HCT116 (cell line): ENCODE measurements at regions of chr11 and their contacts with region 1.

Region 1: DNA sequence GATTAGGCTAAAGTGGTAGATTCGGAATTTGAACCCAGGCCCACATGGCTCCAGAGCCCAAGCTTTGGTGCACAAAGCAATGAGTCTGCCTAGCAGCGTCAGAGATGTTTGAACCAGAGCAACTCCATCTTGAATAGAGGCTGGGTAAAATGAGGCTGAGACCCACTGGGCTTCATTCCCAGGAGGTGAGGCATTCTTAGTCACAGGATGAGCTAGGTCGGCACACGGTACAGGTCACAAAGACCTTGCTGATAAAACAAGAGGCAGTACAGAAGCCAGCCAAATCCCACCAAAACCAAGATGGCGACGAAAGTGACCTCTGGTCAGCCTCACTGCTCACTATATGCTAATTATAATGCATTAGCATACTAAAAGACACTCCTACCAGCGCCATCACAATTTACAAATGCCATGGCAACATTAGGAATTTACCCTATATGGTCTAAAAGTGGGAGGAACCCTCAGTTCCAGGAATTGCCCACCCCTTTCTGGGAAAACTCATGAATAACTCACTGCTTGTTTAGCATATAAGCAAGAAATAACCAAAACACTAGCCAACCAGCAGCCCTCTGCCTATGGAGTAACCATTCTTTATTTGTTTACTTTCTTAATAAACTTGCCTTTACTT is 40.3 kb upstream of the DAGLA start:
- DNase-seq: no peak
- ATAC-seq: no peak
- H3K4me3 ChIP-seq: no peak overlapping the region
- H3K27ac ChIP-seq: no peak overlapping the region
- H3K4me1 ChIP-seq: peaks cover 2 to 13% of the 10 kb centered on the region in 2 experiments; a peak in 2 of 4 replicates
- H3K27me3 ChIP-seq: no peaks in the 10 kb centered on the region
- CTCF ChIP-seq: no peak
- POLR2A ChIP-seq: no peak
- RAD21 ChIP-seq: no peak

Region 2: DNA sequence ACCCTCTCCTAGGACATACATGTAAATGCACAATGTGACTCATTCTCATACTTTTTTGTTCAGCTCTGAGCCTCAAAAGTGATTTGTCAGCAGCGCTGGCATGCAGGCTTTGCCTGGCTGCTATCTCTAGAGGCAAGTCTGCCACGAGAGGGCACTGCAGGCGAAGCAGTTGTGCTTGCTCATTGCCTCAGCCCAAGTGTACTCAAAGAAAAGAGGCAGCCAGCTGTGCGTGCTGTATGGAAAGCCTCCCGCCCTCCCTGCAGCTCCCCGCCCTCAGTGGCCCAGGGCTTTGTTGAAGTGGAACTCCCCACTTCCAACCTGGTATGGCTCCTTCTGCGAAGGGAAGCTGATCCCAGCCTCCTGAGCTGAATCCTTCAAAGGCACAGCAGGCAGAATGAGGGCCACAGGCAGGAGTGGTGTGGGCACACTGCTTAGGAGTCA is 193.7 kb before region 1 on chr11:
- CTCF ChIA-PET with region 1: interaction called, 37 read pairs
- POLR2A ChIA-PET with region 1: no interaction called
- RAD21 ChIA-PET with region 1: no interaction called
- intact Hi-C with region 1: loop called (anchors 1 kb)
- DNase-seq: peak; percentile 73
- ATAC-seq: peak; percentile 98
- H3K4me3 ChIP-seq: no peak overlapping the region
- H3K27ac ChIP-seq: peak overlapping the region; percentile 15; the same call in 1 of the 2 replicates
- H3K4me1 ChIP-seq: peaks cover 0 to 8% of the 10 kb centered on the region in 2 experiments; a peak in 2 of 4 replicates
- H3K27me3 ChIP-seq: no peaks in the 10 kb centered on the region
- CTCF ChIP-seq: peak; percentile 81 to 94 (median 91); a peak in 5 of 6 replicates
- POLR2A ChIP-seq: no peak
- RAD21 ChIP-seq: peak; percentile 84

Region 3: DNA sequence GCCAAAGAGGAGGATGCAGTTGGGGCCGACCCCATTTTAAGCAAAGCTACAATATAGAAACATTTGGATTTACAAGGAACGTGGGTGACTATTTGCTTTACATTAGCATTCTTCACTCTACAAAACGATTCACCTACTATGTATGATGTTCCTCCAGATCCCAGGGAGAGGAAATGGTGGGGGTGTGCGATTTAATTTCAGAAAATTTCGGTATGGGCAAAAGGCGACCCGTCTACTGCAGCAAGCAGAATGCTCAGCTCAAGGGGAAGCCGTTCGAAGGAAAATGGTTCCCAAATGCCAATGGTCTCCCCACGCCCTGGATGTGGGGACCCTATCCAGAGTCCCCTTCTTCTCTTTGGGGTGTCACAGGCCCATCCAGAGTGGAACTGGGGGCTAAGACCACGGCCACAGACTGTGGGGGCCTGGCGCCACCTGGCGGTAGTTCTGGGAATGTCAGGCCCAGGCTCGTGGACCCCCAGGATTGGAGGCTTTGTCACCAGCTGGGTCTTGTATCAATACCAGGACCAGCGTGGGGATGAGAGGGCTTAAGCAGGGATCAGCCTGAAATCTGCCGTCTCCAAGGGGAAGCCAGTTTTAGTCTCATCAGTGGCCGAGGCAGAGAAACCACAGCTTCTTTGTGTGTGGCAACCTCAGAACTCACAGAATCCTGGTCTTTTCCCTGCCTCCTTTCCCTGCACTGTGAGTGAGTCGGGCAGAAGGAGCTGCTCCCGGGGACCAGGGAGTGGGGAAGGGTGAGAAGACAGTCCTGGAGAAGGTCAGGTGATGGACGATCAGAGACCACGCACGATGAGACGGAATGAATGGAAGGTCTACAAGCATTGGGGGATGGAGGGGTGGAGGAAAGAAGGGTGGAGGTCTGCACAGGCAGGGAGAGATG is 123.0 kb before region 1 on chr11:
- CTCF ChIA-PET with region 1: interaction called, 14 read pairs
- POLR2A ChIA-PET with region 1: no interaction called
- RAD21 ChIA-PET with region 1: no interaction called
- intact Hi-C with region 1: no loop called
- DNase-seq: no peak
- ATAC-seq: peak; percentile 75
- H3K4me3 ChIP-seq: no peak overlapping the region
- H3K27ac ChIP-seq: no peak overlapping the region
- H3K4me1 ChIP-seq: peaks cover 8 to 14% of the 10 kb centered on the region in 2 experiments; a peak in 2 of 4 replicates
- H3K27me3 ChIP-seq: no peaks in the 10 kb centered on the region
- CTCF ChIP-seq: peak; percentile 81 to 99 (median 98)
- POLR2A ChIP-seq: no peak
- RAD21 ChIP-seq: peak; percentile 82

Region 4: DNA sequence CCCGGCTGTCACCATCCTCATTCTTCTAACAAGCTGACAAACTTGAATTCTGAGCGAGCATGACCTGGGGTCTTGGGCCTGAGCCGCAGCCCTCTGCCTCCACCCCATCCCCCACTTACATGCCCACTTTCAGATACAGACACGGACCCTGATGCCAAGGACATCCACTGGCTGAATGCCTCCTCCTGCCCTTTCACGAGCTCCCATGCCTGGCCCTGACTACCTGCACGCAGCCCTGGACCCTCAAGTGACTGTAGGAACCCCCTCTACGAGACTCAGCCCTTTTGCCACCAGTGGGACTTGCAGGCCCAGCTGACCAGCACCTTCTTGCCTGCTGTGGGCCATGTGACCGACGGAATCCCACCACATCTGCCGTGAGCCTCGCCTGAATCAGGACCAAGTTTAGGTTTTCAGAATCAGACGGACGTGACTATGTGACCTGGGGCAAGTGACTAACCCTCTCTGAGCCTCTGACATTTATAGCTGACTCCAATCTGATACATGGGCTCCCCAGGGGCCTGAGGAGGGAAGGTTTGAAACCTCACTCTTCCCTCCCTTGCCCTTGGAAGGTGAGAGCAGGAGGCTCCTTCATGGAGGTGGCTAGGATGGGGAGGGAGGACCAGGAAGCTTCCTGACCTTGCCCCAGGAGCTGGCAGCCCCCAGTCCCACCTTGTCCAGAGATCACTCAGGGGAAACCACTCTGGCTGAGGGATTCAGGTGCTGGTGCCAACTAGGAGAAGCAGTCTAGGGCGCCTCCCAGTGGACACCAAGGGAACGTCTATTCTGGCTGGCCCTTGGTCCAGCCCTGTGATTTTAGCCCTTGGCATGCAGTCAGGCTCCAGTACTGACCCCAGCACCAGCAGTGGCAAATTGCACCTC is 12.1 kb before region 1 on chr11:
- CTCF ChIA-PET with region 1: interaction called, 15 read pairs
- POLR2A ChIA-PET with region 1: no interaction called
- RAD21 ChIA-PET with region 1: no interaction called
- intact Hi-C with region 1: no loop called
- DNase-seq: peak; percentile 45
- ATAC-seq: peak; percentile 88
- H3K4me3 ChIP-seq: no peak overlapping the region
- H3K27ac ChIP-seq: peak overlapping the region; percentile 68
- H3K4me1 ChIP-seq: peaks cover 33 to 53% of the 10 kb centered on the region in 2 experiments
- H3K27me3 ChIP-seq: no peaks in the 10 kb centered on the region
- CTCF ChIP-seq: peak; percentile 92 to 96 (median 95)
- POLR2A ChIP-seq: no peak
- RAD21 ChIP-seq: peak; percentile 99

Region 5: GRCh38 chr11:61733120-61733978 is 93.4 kb after region 1 on chr11:
- CTCF ChIA-PET with region 1: interaction called, 20 read pairs
- POLR2A ChIA-PET with region 1: no interaction called
- RAD21 ChIA-PET with region 1: interaction called, 5 to 10 read pairs
- intact Hi-C with region 1: no loop called
- DNase-seq: peak; percentile 63
- ATAC-seq: peak; percentile 69
- H3K4me3 ChIP-seq: no peak overlapping the region
- H3K27ac ChIP-seq: no peak overlapping the region
- H3K4me1 ChIP-seq: peaks cover 29 to 43% of the 10 kb centered on the region in 2 experiments
- H3K27me3 ChIP-seq: no peaks in the 10 kb centered on the region
- CTCF ChIP-seq: peak; percentile 95 to 99 (median 99)
- POLR2A ChIP-seq: no peak
- RAD21 ChIP-seq: peak; percentile 98